ENCODE measurements at regions of chr2 and their contacts with region 1.

Region 1: GRCh38 chr2:64586883-64587481 is 62.9 kb downstream of the AFTPH start:
- DNase-seq: no peak
- H3K4me3 ChIP-seq: no peak overlapping the region
- H3K27ac ChIP-seq: no peak overlapping the region
- H3K4me1 ChIP-seq: peaks cover 2 to 4% of the 10 kb centered on the region in 2 experiments; a peak in 2 of 4 replicates
- H3K27me3 ChIP-seq: no peaks in the 10 kb centered on the region
- CTCF ChIP-seq: peak; percentile 76
- EP300 ChIP-seq: no peak
- RAD21 ChIP-seq: peak; percentile 86

Region 2: DNA sequence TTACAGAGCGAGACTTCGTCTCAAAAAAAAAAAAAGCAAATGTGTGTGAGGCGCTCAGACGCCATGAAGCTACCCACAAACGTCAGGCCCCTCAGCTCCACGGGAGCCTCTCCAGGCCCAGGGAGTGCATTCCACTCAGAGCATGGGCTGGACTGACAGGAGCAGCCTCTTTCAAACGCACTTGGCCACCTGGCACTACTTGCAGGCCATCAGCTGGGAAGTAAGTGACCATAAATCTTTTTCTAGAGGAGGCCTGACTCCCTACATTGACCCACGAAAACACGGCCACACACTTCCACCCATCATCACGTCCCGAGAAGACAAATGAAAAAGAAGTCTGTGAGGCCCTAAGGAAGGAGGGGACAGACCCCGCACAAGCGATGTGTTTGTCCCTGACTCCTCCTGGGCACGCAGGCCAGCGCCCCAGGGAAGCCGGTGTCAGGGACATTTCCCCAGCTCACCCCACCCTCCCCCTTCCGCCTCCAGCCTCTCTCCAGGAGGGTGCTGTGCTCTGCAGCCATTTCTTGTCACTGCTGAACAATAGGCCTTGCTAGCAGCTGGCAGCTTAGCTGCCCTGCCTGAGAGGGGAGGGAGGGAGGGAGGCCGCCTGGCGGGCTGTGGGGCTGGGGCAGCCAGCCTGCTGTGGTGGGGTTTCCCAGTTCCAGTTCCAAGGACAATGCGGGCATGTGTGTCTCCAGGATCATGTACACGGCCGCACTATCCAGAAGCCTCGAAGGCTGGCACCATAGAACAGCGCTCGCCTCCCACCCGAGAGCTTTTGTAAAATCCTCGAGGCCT is 40.2 kb after region 1 on chr2:
- CTCF ChIA-PET with region 1: interaction called, 10 read pairs
- POLR2A ChIA-PET with region 1: no interaction called
- DNase-seq: peak; percentile 61
- H3K4me3 ChIP-seq: no peak overlapping the region
- H3K27ac ChIP-seq: no peak overlapping the region
- H3K4me1 ChIP-seq: peaks cover 0 to 45% of the 10 kb centered on the region in 2 experiments; a peak in 2 of 4 replicates
- H3K27me3 ChIP-seq: no peaks in the 10 kb centered on the region
- CTCF ChIP-seq: no peak
- EP300 ChIP-seq: no peak
- RAD21 ChIP-seq: no peak

Region 3: DNA sequence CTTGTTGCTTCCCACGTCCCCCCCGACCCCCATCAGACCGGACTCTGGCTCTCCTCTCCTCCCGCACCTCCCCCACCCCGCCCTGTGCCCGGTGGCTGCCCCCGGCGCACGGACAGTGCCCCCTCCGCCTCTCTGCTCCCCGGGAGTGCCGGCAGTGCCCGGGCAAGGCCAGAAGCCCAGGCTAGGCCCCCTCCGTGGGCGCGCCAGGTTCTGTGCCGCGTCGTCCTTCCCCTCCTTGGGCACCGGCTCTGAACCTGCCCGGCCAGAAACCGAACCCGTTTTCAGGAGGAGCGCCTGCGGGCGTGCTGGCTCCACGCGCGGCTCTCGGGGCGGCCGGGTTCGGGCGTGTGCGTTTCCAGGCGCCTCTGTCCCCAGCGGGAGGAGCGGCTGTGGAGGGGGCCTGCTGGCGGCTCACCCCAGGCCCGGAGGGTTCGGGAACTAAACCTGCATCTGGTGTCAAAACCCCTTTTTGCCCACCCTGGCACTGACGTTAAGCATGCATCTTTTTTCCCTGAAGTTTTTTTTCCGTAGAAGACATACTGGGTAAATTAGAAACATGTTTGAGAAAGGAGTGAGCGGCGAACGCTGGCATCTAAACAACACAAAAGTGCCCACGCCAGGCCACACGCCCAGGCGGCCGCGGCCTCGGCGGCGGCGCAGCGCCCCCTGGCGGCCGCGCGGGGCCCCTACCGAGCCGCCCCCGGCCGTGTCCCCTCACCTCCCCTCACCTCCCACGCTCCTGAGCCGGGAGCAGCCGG is 278.3 kb after region 1 on chr2:
- CTCF ChIA-PET with region 1: interaction called, 21 read pairs
- POLR2A ChIA-PET with region 1: no interaction called
- DNase-seq: peak; percentile 95
- H3K4me3 ChIP-seq: peak overlapping the region; percentile 52 to 63
- H3K27ac ChIP-seq: peak overlapping the region; percentile 86 to 89
- H3K4me1 ChIP-seq: peaks cover 0 to 8% of the 10 kb centered on the region in 2 experiments; a peak in 1 of 4 replicates
- H3K27me3 ChIP-seq: no peaks in the 10 kb centered on the region
- CTCF ChIP-seq: peak; percentile 56; the same call in 1 of the 2 replicates
- EP300 ChIP-seq: peak in 1 of 2 experiments; percentile 27; a peak in 3 of 4 replicates
- RAD21 ChIP-seq: peak; percentile 76

Measured in SK-N-SH (cell line).